ENCODE measurements at regions of chr2 and their contacts with region 1.

Region 1: DNA sequence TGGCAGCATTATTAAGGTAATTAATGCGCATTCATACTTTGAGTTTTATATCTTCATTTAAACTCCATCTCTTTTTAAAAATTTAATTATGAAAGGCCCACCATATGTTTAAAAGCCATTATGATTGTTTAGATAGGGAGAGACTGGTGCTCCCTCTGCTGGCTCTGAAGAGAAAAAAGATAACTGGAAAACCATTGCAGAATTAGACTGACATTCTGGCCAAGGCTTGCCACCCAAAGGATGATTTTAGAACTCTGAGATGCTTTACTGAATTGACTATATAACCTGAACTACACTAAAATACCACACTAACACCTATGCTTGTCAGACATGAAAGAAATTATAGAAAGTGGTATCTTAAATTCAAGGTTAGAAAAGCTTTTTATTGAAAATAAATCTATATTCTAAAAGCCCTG is 127.6 kb upstream of the SPOPL start:
- DNase-seq: peak in 1 of 2 donors; percentile 77
- H3K4me3 ChIP-seq: no peak overlapping the region
- H3K27ac ChIP-seq: no peak overlapping the region
- H3K4me1 ChIP-seq: peaks cover 0 to 11% (median 0%) of the 10 kb centered on the region in 4 donors
- H3K27me3 ChIP-seq: no peaks in the 10 kb centered on the region
- CTCF ChIP-seq: peak in 5 of 7 experiments; percentile 31 to 60 (median 45)
- EP300 ChIP-seq: no peak
- POLR2A ChIP-seq: no peak

Region 2: DNA sequence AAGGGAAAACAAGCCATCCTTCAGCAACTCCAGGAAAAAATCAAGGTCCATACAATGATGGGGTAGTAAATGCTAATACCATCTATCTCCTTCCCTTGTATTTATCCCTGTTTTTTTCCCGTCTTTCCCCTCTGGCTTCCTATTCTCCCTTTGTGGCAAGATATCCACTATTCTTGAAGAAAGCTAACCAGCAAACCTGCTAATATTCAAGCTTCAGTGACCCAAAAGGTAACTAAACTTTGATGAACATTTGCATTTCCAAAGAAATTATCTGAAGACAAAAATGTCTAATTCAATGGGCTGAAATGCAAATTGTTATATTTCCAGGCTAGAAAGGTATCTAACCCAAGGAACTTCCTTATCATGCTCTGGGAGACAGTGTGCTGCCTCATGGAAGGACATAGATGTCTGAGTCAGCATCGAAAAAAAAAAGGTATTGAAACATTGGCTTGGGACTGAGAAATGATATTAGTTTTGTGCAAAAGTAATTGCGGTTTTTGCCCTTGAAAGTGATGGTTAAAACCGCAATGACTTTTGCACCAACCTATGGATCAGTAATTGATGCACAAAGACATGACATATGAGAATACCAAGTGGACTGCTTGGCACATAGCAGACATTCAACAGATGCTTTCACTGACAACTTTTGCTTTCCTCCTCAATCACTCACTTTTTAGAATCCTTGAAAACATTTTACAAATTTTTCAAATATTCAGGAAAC is 473.4 kb before region 1 on chr2:
- intact Hi-C with region 1: loop called (anchors 10 kb)
- DNase-seq: no peak
- H3K4me3 ChIP-seq: no peak overlapping the region
- H3K27ac ChIP-seq: no peak overlapping the region
- H3K4me1 ChIP-seq: no peaks in the 10 kb centered on the region
- H3K27me3 ChIP-seq: no peaks in the 10 kb centered on the region
- CTCF ChIP-seq: no peak
- EP300 ChIP-seq: no peak
- POLR2A ChIP-seq: no peak

Region 3: GRCh38 chr2:138455275-138456052 is 81.5 kb after region 1 on chr2:
- intact Hi-C with region 1: no loop called
- DNase-seq: no peak
- H3K4me3 ChIP-seq: no peak overlapping the region
- H3K27ac ChIP-seq: no peak overlapping the region
- H3K4me1 ChIP-seq: peaks cover 0 to 8% (median 0%) of the 10 kb centered on the region in 4 donors
- H3K27me3 ChIP-seq: no peaks in the 10 kb centered on the region
- CTCF ChIP-seq: no peak
- EP300 ChIP-seq: no peak
- POLR2A ChIP-seq: no peak

Region 4: DNA sequence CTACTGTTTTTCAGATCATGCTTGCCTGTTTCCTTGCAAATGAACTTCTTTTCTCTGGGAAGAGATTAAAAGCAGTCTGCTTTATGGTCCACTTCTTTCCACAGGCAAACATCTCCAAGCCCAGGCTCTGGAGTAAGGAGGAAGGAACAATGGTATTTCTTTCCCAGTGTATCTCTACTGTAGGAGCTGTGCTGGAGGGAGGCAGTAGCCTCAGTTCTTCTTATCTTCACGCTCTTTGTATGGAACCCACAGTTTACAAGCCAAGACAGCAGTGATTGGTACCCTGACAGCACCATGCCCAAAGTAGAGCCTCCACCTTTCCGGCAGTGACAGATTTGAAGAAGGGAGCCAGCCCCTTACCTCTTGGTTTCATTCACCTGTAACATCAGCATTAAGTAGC is 162.7 kb after region 1 on chr2:
- intact Hi-C with region 1: no loop called
- DNase-seq: no peak
- H3K4me3 ChIP-seq: no peak overlapping the region
- H3K27ac ChIP-seq: no peak overlapping the region
- H3K4me1 ChIP-seq: peaks cover 0 to 31% (median 13%) of the 10 kb centered on the region in 4 donors
- H3K27me3 ChIP-seq: no peaks in the 10 kb centered on the region
- CTCF ChIP-seq: no peak
- EP300 ChIP-seq: no peak
- POLR2A ChIP-seq: no peak

Measured in stomach (tissue), 19 donors.